Tibial artery (tissue), 4 donors: ENCODE measurements at regions of chr22 and their contacts with region 1.

Region 1: GRCh38 chr22:38872172-38872830 is at the start of gene CBX6:
- DNase-seq: peak; percentile 93 to 97
- H3K4me3 ChIP-seq: peak within 1 kb of the TSS; percentile 70 to 93
- H3K27ac ChIP-seq: peak within 1 kb of the TSS; percentile 95 to 98
- H3K4me1 ChIP-seq: peaks cover 10 to 46% (median 34%) of the 10 kb centered on the region in 4 donors
- H3K27me3 ChIP-seq: no peaks in the 10 kb centered on the region
- CTCF ChIP-seq: peak in 1 of 2 experiments; percentile 16

Region 2: DNA sequence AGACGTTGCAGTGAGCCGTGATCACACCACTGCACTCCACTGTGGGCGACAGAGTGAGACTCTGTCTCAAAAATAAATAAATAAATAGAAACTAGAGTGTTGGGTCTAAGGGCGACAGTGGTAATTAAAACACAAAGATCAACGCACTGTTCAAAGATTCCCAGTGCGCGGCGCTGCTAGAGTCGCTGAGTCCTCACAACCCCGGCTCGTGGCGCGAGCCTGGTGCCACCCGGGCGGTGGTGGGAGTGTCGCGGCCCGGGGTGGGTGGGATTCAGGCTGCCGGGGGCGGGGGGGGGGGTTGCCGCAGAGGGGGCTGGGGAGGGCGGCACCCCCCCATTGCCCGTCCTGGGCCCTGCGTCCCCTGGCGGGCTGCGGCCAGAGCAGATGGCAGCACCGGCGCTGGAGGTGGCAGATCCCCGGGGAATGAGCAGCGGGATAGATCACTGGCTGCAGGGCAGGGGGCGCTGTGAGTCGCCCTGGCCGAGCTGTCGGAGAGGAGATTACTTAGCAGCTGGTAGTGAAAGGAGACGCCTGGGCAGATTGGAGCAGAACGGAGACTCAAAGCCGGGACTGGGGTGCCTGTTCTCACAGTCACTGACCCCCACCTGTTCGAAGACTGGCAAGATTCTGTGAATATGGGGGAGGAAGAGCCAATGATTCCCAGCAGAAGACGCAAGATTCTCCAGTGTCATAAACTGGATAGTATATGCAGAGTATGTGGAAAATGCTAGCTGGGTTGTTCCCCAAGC is 54.9 kb after region 1 on chr22:
- intact Hi-C with region 1: loop called (anchors 5 kb)
- DNase-seq: peak; percentile 63 to 86
- H3K4me3 ChIP-seq: peak overlapping the region; percentile 44 to 51
- H3K27ac ChIP-seq: peak overlapping the region; percentile 75 to 82
- H3K4me1 ChIP-seq: peaks cover 0 to 51% (median 27%) of the 10 kb centered on the region in 4 donors
- H3K27me3 ChIP-seq: no peaks in the 10 kb centered on the region
- CTCF ChIP-seq: peak; percentile 33 to 72

Region 3: DNA sequence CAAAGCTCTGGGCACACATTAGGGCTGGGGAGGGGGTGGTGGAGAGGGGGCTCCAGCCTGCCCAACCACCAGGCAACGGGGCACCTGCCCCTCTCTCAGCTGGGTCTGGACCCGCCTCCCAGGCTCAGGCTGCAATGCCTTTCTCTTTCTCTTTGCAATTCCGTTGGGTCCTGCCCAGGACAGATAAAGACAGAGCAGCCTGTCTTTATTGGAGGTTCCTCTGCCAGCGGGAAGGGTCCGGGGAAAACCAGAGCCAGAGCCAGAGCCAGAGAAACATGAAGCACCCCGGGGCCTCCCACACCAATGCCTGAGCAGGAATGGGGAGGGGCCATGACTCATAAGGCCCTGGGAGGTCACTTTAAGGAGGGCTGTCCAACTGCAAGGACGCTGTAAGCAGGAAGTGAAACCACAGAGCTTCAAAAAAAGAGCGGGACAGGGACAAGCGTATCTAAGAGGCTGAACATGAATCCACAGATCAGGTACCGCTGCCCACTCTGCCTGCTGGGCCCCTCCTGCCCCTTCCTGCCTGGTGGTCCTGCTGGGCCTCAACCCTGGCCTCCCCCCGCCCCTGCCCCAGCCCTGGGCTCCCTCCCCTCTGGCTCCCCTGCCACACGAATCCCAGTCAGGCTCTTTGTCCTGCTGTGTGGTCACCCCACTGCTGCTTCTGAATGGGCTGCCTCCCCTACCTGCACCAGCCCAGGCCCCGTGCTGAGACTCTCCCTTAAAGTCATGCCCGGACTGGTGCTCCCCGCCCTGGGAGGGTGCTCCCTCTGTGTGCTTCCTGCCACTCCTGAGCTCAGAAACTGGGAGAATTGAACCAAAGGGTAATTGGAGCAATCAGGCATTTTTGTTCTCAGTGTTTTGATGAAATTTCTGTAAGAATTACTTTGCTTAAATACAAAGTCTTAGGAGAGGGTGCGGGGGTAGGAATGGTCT is 110.0 kb after region 1 on chr22 and contains the start of gene APOBEC3B:
- intact Hi-C with region 1: loop called (anchors 5 kb)
- DNase-seq: peak; percentile 91 to 93
- H3K4me3 ChIP-seq: peak within 1 kb of the TSS; percentile 55
- H3K27ac ChIP-seq: peak within 1 kb of the TSS in 1 of 2 donors; percentile 42
- H3K4me1 ChIP-seq: peaks cover 0 to 18% (median 5%) of the 10 kb centered on the region in 4 donors
- H3K27me3 ChIP-seq: no peaks in the 10 kb centered on the region
- CTCF ChIP-seq: no peak

Region 4: DNA sequence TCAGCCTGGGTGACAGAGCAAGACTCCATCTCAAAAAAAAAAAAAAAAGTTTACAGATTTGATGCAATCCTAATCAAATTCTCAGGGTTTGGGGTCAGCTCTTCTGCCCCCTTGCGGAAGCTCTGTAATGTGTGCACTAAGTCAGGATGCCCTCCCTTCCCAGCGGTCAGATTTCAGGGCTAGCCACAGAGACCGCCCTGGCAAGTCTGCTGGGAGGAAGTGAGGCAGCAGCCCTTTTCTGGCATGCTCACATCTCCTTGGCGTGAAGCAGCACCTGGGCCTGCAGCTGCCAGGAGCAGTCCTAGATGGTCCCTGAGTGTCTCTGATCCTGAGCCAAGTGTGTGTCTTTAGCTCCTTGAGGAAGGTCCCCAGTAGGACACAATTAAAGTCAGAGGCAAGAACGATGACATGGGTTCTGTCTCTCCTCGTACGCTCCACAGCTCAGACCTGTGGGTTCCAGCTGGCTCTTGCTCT is 130.9 kb after region 1 on chr22:
- intact Hi-C with region 1: loop called (anchors 5 kb)
- DNase-seq: peak; percentile 73 to 86
- H3K4me3 ChIP-seq: no peak overlapping the region
- H3K27ac ChIP-seq: no peak overlapping the region
- H3K4me1 ChIP-seq: peaks cover 0 to 4% (median 0%) of the 10 kb centered on the region in 4 donors
- H3K27me3 ChIP-seq: peaks cover 0 to 3% of the 10 kb centered on the region in 2 donors
- CTCF ChIP-seq: peak; percentile 76 to 78

Region 5: DNA sequence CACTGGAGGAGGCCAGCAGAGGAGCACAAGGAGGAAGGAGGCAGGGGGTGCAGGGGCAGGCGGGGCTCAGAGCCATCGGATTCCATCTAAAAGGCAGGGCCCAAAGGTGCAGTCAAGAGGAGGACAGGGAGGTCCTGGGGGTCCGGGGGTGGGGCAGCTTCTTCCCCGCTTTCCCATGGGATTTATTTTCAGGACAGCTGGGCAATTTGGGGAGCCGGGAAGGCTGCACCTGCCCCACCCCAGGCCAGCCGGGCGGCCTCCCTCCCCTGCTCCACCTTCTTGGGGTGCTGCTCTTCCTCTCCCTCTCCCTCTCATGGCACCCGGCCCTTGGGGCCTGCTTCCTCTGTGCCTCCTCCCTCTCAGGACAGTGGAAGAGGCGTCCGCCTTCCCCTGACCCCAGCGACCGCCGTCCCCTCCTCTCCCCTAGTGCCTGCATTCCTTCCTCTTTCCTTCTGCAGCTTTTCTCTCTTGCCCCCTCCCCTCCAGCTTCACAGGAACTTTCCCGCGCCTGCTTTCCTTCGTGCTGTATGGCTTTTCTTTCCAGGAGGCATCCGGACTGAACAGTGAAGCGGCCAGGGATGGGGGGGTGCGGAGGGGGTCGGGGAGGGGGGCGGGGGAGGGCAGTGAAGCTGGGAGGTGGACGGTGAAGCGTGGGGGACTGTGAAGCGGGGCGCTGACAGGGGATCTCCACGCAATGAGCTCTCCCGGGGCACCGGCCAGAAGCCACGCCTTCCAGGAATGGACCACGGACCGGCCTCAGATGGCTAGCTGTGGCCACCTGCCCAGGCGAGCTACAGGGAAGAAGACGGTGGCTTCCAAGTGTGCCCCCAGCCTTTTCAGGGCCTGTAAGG is 251.7 kb after region 1 on chr22:
- intact Hi-C with region 1: loop called (anchors 5 kb)
- DNase-seq: no peak
- H3K4me3 ChIP-seq: no peak overlapping the region
- H3K27ac ChIP-seq: no peak overlapping the region
- H3K4me1 ChIP-seq: peaks cover 0 to 4% (median 2%) of the 10 kb centered on the region in 4 donors
- H3K27me3 ChIP-seq: no peaks in the 10 kb centered on the region
- CTCF ChIP-seq: no peak